WTC11 (cell line): ENCODE measurements at regions of chr15 and their contacts with region 1.

Region 1: DNA sequence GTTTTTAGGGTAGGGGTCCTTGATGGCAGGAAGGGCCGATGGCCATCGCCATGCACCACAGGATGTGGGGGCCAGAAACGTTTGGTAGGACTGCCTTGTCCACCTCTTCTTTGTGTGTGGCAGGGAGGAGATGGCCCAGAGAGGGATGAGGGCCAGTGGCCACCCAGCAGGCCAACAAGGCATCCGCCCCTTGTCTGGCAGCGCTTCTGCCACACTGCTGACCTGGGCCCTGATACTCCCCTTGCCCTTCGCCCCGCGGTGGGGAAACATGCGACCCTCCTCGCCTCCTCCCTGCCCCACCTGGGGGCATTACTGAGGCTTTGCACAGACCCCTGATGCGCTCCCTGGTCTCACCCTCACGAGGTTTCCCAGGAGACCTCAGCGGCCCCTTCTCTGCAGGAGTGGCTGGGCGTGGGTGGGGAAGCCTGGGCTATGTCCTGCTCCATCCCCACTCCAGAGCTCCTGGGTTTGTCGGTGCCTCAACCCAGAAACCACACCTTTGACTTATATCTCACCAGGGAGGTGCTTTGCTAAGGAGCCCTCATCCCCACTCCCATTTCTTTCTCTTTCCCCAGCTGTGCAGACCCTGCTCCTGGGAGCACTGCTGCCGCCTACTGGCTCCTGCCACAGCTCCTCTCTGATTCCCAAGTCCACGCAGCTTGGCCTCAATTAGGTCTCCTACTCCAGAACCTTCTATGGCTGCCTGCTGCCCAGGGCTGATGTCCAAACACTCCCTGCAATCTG is 38.7 kb downstream of the FEM1B start:
- DNase-seq: peak; percentile 67
- ATAC-seq: peak; percentile 82
- H3K4me3 Mint-ChIP-seq: 0 out of 2 replicates have a peak overlapping the region, but pooled peaks have one; percentile 24
- H3K27ac Mint-ChIP-seq: no peak overlapping the region
- H3K4me1 Mint-ChIP-seq: peaks cover 23% of the 10 kb centered on the region
- H3K27me3 Mint-ChIP-seq: no peaks in the 10 kb centered on the region
- CTCF ChIP-seq: no peak

Region 2: GRCh38 chr15:68335251-68335650 is 19.0 kb after region 1 on chr15:
- CTCF ChIA-PET with region 1: interaction called, 15 read pairs
- POLR2A ChIA-PET with region 1: no interaction called
- DNase-seq: no peak
- ATAC-seq: no peak
- H3K4me3 Mint-ChIP-seq: no peak overlapping the region
- H3K27ac Mint-ChIP-seq: no peak overlapping the region
- H3K4me1 Mint-ChIP-seq: peaks cover 13% of the 10 kb centered on the region
- H3K27me3 Mint-ChIP-seq: no peaks in the 10 kb centered on the region
- CTCF ChIP-seq: no peak

Region 3: DNA sequence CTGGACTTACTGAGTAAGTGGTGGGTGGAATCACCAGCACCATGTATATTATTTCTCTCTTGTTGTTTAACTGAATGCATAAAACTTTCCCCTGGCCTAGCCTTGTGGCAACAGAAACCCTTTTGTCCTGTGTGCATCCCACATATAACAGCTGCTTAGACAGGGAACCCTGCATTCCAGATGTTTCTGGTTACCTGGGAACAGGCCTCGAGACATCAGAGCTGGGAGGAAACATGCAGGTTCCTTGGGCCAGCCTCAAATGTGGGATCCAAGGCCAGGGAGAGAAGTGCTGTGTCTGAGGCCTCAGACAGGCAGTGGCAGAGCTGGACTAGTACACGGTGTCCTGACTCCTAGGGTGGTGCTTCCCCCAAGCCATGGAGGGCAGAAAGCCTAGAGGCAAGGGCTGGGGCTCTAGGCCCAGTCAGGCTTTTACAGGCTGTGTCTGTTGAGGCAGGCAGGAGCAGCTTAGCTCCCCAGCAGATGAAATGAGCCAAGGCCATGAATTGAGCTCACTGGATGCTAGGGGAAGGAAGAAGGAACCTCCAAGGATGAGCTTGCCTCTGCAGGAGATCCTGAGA is 58.0 kb after region 1 on chr15:
- CTCF ChIA-PET with region 1: interaction called, 11 read pairs
- POLR2A ChIA-PET with region 1: no interaction called
- DNase-seq: no peak
- ATAC-seq: no peak
- H3K4me3 Mint-ChIP-seq: no peak overlapping the region
- H3K27ac Mint-ChIP-seq: no peak overlapping the region
- H3K4me1 Mint-ChIP-seq: no peaks in the 10 kb centered on the region
- H3K27me3 Mint-ChIP-seq: no peaks in the 10 kb centered on the region; the same call in 1 of the 2 replicates
- CTCF ChIP-seq: no peak

Region 4: DNA sequence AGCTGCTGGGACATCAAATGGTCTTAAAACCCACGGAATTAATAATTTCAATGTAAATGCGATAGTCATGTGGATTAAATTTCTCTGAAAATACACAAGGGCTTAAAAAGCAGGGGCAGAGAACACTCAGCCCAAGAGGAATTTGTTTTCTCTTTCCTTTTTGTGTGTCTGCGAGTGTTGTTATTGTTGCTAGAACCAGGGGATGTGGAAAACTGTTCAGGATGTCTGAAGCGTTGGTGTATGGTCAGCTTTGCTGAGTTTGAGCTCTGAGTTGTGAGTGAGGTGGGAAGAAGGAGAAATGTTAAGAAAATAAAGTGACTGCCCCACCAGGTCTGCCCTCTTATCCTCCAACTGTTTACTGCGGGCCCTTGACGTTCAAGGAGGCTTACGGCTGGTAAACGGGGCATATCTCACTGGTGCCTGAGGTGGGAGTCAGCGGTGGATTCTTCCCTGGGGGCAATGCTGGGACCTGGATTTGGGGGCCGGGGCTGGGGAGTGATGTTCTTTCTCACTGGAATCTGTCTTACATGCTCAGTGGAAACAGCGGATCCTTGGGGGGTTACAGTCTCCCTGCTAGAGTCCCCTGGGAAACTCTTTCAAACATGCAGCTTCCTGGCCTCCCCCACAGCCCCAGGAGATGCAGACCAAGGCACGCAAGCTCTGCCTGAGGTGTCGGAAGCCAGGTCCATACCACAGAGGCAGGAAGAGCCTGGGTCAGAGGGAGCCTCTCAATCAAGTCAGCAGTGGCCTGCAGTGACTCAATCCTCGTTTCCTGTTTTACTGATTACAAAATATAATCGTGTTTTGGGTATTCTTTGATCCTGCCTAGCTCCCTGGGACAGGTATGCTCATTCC is 73.9 kb after region 1 on chr15:
- CTCF ChIA-PET with region 1: interaction called, 10 read pairs
- POLR2A ChIA-PET with region 1: no interaction called
- DNase-seq: peak; percentile 5
- ATAC-seq: no peak
- H3K4me3 Mint-ChIP-seq: no peak overlapping the region
- H3K27ac Mint-ChIP-seq: no peak overlapping the region
- H3K4me1 Mint-ChIP-seq: no peaks in the 10 kb centered on the region
- H3K27me3 Mint-ChIP-seq: peaks cover 7% of the 10 kb centered on the region
- CTCF ChIP-seq: no peak

Region 5: DNA sequence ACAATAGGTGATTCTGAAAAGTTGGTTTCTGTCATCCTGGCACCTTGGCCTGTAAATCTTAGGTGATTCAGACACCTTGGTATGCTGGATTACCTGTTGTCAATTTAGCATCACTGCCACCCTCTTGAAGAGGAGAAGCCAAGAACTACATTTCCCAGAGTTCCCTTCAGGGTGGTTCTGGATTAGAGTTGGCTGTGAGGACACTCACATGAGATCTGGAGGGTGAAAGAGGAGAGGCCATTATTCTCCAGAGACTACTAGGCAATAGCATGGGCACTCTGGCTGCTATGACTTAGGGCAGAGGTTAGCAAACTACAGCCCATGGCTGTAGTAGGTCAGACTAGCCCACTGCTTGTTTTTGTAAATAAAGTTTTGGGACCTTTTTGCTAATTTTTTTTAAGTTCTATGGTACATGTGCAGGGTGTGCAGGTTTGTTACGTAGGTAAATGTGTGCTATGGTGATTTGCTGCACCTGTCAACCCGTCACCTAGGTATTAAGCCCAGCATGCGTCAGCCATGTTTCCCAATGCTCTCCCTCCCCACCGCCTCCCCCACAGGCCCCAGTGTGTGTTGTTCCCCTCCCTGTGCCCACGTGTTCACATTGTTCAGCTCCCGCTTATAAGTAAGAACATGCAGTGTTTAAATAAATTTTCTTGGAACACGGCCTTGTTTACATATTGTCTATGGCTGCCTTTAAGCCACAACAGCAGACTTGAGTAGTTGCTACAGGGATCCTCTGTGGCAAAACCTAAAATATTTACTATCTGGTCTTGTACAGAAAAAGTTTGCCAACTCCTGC is 221.1 kb after region 1 on chr15:
- CTCF ChIA-PET with region 1: interaction called, 17 read pairs
- POLR2A ChIA-PET with region 1: no interaction called
- DNase-seq: no peak
- ATAC-seq: peak; percentile 73
- H3K4me3 Mint-ChIP-seq: no peak overlapping the region
- H3K27ac Mint-ChIP-seq: no peak overlapping the region
- H3K4me1 Mint-ChIP-seq: no peaks in the 10 kb centered on the region
- H3K27me3 Mint-ChIP-seq: peaks cover 6% of the 10 kb centered on the region
- CTCF ChIP-seq: no peak

Region 6: GRCh38 chr15:68691705-68692104 is 375.5 kb after region 1 on chr15:
- CTCF ChIA-PET with region 1: no interaction called
- POLR2A ChIA-PET with region 1: no interaction called
- DNase-seq: no peak
- ATAC-seq: peak; percentile 69
- H3K4me3 Mint-ChIP-seq: no peak overlapping the region
- H3K27ac Mint-ChIP-seq: no peak overlapping the region
- H3K4me1 Mint-ChIP-seq: peaks cover 20% of the 10 kb centered on the region
- H3K27me3 Mint-ChIP-seq: peaks cover 5% of the 10 kb centered on the region
- CTCF ChIP-seq: no peak